Left ventricle myocardium superior (tissue), 1 donor: ENCODE measurements at regions of chr9 and their contacts with region 1.

Region 1: GRCh38 chr9:98263482-98264357 is 8.3 kb upstream of the TBC1D2 start:
- DNase-seq: peak; percentile 81
- ATAC-seq: peak; percentile 94

Region 2: GRCh38 chr9:97921959-97922724 is 341.6 kb before region 1 on chr9 and contains the start of gene TRMO:
- intact Hi-C with region 1: loop called (anchors 5 kb)
- DNase-seq: peak; percentile 99
- ATAC-seq: peak; percentile 97
- total RNA-seq, gene TRMO: 6.0 TPM

Region 3: DNA sequence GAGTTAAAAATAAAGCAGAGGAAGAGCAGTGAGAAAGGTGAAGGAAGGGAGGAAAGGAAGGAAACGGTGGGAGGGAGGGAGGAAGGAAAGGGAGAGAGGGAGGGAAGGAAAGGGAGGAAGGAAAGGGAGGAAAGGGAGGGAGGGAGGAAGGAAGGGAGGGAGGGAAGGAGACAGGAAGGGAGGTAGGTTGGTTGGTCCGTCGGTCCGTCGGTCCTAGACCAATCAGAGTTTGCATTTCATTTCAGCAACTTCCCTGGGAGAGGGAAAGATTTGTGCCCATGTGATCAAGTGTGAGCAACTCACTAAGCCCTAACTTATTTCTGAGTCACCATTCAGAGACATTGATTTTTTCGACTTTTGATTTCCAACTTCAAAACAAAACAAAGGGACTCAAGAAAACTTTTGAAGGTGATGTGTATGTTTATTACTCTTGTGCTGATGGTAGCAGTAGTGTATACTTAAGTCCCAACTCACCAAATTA is 188.4 kb before region 1 on chr9:
- intact Hi-C with region 1: loop called (anchors 5 kb)
- DNase-seq: no peak
- ATAC-seq: peak; percentile 57

Region 4: GRCh38 chr9:98207606-98208005 is 56.1 kb before region 1 on chr9:
- intact Hi-C with region 1: loop called (anchors 5 kb)
- DNase-seq: no peak
- ATAC-seq: no peak

Region 5: GRCh38 chr9:98315551-98316060 is 51.9 kb after region 1 on chr9:
- intact Hi-C with region 1: no loop called
- DNase-seq: peak; percentile 78
- ATAC-seq: peak; percentile 95